AG04450 (cell line): ENCODE measurements at regions of chr22 and their contacts with region 1.

Region 1: GRCh38 chr22:31561238-31561887 is 65.0 kb downstream of the SFI1 start:
- DNase-seq: peak; percentile 47
- H3K4me3 ChIP-seq: no peak overlapping the region
- H3K27ac ChIP-seq: no peak overlapping the region
- H3K27me3 ChIP-seq: no peaks in the 10 kb centered on the region
- CTCF ChIP-seq: peak; percentile 94

Region 2: DNA sequence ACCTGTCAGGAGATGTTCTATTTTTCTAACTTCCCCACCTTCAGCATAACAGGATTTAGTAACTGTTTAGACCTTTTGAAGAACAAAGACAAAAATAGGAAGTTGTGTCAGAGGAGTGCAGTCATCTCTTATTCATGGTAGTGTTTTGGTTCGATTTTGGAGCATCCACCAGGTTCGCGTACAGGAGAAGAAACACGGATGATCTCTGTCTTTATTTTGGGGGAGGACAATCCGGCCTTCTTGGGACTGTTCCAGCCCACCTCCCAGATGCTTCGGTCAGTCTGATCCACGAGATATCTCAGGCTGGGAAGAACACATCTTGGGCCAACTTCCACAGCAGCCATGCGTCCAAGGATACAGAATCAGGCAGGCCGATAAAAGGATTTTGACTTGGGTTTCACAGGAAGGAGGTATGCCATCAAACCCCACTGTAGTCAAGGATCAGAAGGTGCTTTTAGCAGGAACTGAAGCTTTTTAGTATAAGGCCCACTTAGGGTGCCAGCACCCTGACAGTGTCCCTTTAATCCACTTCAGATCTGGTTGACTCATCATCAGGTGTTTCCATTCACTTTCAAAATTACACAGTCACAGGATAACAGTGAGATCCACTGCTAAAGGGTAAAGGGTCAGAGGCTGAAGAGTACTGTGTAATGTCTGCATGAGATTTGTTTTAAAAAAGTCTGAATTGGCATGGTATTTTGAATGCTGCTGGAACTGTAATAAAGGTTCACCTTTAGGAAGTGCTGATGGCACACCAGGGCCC is 231.7 kb before region 1 on chr22:
- CTCF ChIA-PET with region 1: no interaction called
- POLR2A ChIA-PET with region 1: no interaction called
- DNase-seq: no peak
- H3K4me3 ChIP-seq: no peak overlapping the region
- H3K27ac ChIP-seq: no peak overlapping the region
- H3K27me3 ChIP-seq: no peaks in the 10 kb centered on the region
- CTCF ChIP-seq: no peak

Region 3: DNA sequence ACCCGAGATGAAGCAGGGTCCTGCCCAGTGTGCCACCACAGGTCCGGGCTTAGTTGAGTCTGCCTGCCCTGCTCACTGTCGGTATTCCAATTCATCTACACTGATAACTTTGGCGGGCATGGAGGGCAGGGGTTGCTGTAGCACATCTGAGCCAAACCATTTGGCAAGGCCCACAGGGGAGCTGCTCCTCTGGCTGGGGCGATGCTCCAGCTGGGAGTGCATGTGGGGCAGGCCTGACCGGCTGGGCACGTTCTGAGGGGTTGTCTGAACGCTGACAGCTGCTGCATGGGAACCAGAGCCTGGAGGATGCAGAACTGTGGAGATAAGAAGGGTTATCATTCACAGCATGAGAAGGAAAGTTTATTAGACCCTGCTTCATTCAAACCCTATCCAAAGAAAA is 121.6 kb before region 1 on chr22:
- CTCF ChIA-PET with region 1: no interaction called
- POLR2A ChIA-PET with region 1: no interaction called
- DNase-seq: no peak
- H3K4me3 ChIP-seq: no peak overlapping the region
- H3K27ac ChIP-seq: no peak overlapping the region
- H3K27me3 ChIP-seq: no peaks in the 10 kb centered on the region
- CTCF ChIP-seq: no peak

Region 4: GRCh38 chr22:31537019-31537535 is 24.3 kb before region 1 on chr22:
- CTCF ChIA-PET with region 1: interaction called, 23 read pairs
- POLR2A ChIA-PET with region 1: no interaction called
- DNase-seq: no peak
- H3K4me3 ChIP-seq: no peak overlapping the region
- H3K27ac ChIP-seq: no peak overlapping the region
- H3K27me3 ChIP-seq: no peaks in the 10 kb centered on the region
- CTCF ChIP-seq: no peak

Region 5: DNA sequence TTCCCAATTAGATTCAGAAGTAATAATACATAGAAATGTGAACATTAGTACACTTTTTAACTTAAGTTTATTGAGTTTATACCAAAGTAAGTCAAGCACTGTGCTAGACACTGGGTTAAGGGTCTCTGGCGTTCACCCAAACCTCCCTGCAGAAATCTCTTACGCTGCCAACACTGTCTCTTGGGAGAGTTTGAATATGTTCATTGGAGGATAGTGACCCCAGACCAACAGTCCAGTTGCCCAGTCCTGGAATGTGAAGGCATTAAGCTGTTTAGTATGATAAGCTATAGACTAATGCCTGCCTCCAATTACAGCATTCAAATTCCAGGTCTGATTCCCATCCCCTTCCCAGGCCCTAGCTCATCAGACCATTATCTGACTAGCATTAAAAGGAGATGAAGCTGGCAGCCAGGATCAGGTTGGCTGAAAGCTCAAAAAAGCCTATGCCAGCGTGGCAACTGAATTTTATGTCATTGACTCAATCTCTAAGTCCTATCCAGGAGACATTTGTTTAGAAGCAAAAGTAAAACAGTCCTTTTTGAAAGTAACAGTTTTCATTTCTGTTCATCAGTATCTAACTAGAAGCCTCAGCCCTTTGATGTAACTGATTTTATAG is 12.8 kb after region 1 on chr22:
- CTCF ChIA-PET with region 1: interaction called, 10 read pairs
- POLR2A ChIA-PET with region 1: no interaction called
- DNase-seq: no peak
- H3K4me3 ChIP-seq: no peak overlapping the region
- H3K27ac ChIP-seq: no peak overlapping the region
- H3K27me3 ChIP-seq: no peaks in the 10 kb centered on the region
- CTCF ChIP-seq: no peak

Region 6: GRCh38 chr22:31630331-31631329 is 69.3 kb after region 1 on chr22:
- CTCF ChIA-PET with region 1: interaction called, 167 read pairs
- POLR2A ChIA-PET with region 1: interaction called, 6 read pairs
- DNase-seq: no peak
- H3K4me3 ChIP-seq: peak overlapping the region; percentile 81
- H3K27ac ChIP-seq: peak overlapping the region; percentile 81
- H3K27me3 ChIP-seq: no peaks in the 10 kb centered on the region
- CTCF ChIP-seq: no peak